ENCODE measurements at regions of chr17 and their contacts with region 1.

Region 1: GRCh38 chr17:4625181-4625617 is 16.3 kb downstream of the ALOX15 start:
- DNase-seq: peak; percentile 51
- ATAC-seq: peak; percentile 53

Region 2: GRCh38 chr17:4420692-4421131 is 204.5 kb before region 1 on chr17:
- intact Hi-C with region 1: loop called (anchors 5 kb)
- DNase-seq: no peak
- ATAC-seq: peak; percentile 84

Region 3: DNA sequence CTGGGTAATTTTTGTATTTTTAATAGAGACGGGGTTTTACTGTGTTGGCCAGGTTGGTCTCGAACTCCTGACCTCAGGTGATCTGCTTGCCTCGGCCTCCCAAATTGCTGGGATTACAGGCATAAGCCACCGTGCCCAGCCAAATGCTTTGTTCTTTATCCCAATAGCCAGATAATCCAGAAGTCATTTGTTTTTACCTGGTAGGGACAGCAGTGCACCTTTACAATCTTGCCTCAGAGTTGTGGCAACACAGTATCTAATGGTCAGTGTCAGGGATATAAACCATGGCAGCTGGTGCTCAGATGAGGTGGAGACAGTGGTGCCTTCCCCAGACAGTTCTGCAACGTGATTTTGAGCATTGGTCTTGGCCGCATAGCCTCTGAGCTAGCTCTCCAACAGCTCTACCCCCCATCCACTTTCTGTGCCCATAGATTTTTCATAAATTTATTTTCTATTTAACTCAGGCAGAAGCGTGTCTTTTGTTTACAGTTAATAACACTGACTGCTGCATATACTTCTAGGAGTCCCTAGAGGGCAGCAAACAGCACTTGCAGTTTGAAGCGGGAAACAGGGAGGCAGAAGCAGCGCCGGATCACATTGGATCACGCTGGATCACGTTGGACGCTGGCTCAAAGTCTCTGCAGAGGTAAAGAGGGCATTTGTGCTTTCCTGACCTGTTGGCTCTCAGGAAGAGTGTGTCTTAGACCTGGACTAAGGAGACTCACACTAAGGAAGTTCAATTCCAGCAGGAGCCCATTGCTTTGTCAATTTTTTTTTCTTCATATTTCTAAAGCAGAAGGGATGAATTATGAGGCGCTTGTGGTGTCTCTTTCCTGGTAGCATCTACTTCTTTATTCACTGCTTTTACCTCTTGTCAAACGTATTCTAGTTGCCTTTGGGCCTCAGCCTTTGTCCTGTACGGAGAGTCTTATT is 59.7 kb before region 1 on chr17:
- intact Hi-C with region 1: loop called (anchors 1 kb)
- DNase-seq: no peak
- ATAC-seq: peak; percentile 90

Region 4: GRCh38 chr17:4583782-4584100 is 41.5 kb before region 1 on chr17:
- intact Hi-C with region 1: loop called (anchors 5 kb)
- DNase-seq: no peak
- ATAC-seq: peak; percentile 66

Region 5: DNA sequence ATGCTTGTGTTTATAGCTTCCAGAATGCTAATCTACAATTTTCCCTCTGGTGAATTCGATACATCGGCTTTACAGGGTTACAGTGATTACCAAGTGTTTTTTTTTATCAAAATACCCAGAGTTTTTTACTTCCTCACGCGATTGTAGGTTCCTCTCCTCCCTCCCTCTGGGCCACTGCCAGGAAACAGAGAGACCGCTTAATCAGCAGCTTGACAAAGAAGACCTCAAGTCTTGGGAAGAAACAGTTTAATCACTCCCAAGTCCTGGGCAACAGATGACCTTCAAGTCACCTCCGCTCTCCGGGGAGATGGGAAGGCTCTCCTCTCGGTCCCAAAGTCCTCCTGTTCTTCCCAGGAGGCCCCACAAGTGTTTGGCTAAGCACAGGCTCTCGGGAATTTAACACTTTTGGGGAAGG is 17.4 kb before region 1 on chr17:
- intact Hi-C with region 1: no loop called
- DNase-seq: peak; percentile 85
- ATAC-seq: peak; percentile 57

Region 6: GRCh38 chr17:4709794-4710692 is 84.8 kb after region 1 on chr17 and contains the start of gene ARRB2:
- intact Hi-C with region 1: no loop called
- DNase-seq: peak; percentile 100
- ATAC-seq: peak; percentile 97
- total RNA-seq, gene ARRB2: 28.3 TPM

Measured in Right ventricle myocardium inferior (tissue), 1 donor.